Heart right ventricle (tissue), 16 donors: ENCODE measurements at regions of chr4 and their contacts with region 1.

Region 1: DNA sequence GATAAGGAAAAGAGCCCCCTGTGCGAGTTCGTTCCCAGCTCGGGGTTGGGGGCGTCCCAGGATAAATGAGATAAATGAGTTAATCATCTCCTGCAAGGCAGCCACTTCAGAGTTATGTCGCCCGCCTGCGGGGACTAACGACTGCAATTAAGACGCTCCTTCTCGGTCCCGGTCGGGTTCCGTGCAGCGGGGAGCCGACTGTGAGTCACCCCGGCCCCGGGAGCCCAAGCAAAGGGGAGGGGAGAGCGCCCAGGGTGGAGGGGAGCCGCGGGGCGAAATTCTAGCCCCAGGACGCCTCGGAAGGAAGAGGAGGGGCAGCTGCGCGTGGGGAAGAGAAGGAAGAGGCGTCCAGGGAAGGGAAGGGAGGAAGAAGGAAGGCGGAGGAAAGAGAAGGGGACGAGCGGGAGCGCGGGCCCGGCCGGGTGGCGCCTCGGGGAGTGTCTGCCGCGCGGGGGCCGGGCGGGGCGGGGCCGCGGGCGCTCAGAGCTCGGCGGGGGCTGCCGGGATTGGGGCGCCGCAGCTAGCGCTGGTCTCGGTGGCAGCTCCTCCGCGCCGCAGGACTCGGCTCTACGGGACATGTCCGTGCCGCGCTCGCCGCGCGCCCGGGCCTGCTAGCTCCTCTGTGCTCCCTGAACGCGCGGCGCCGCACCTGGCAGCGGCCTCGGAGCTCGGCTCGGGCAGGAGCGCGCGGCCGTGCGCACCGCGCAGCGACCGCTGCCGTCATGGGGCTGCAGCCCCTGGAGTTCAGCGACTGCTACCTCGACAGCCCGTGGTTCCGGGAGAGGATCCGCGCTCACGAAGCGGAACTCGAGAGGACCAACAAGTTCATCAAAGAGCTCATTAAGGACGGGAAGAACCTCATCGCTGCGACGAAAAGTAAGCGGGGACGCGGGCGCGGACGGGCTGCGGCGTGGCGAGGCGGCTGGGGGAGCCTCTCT is at the start of gene ARHGAP10:
- DNase-seq: peak; percentile 67 to 81
- ATAC-seq: peak; percentile 72 to 90 (median 84)
- H3K4me3 ChIP-seq: peak within 1 kb of the TSS; percentile 44 to 93 (median 78)
- H3K27ac ChIP-seq: peak within 1 kb of the TSS; percentile 86 to 95 (median 92)
- H3K4me1 ChIP-seq: peaks cover 0 to 54% (median 23%) of the 10 kb centered on the region in 9 donors
- H3K27me3 ChIP-seq: peaks cover 0 to 5% (median 0%) of the 10 kb centered on the region in 7 donors
- CTCF ChIP-seq: no peak
- total RNA-seq, gene ARHGAP10: 33.9 to 71.1 (median 60.7) TPM

Region 2: DNA sequence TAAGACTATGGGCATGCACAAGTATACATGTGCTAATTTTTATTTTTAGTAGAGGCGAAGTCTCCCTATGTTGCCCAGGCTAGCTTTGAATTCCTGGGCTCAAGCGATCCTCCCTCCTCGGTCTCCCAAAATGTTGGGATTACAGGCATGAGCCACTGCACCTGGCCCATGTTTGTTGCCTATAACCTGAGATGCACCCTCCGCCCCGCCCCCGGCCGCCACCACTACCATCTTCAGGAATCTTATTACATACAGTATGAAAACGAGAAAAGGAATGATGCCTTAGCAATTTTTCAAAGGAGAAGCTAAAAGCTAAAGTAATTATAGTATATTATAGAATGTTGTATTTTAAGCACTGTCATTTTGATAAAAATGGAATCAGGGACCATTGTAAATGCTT is 1031.9 kb before region 1 on chr4:
- intact Hi-C with region 1: no loop called
- DNase-seq: no peak
- ATAC-seq: no peak
- H3K4me3 ChIP-seq: no peak overlapping the region
- H3K27ac ChIP-seq: no peak overlapping the region
- H3K4me1 ChIP-seq: no peaks in the 10 kb centered on the region
- H3K27me3 ChIP-seq: no peaks in the 10 kb centered on the region
- CTCF ChIP-seq: no peak

Region 3: GRCh38 chr4:147096667-147097604 is 634.9 kb before region 1 on chr4:
- intact Hi-C with region 1: no loop called
- DNase-seq: no peak
- ATAC-seq: peak in 3 of 8 donors; percentile 22 to 65 (median 47)
- H3K4me3 ChIP-seq: no peak overlapping the region
- H3K27ac ChIP-seq: no peak overlapping the region
- H3K4me1 ChIP-seq: peaks cover 0 to 5% (median 0%) of the 10 kb centered on the region in 9 donors
- H3K27me3 ChIP-seq: no peaks in the 10 kb centered on the region
- CTCF ChIP-seq: peak; percentile 61 to 85 (median 71)

Region 4: DNA sequence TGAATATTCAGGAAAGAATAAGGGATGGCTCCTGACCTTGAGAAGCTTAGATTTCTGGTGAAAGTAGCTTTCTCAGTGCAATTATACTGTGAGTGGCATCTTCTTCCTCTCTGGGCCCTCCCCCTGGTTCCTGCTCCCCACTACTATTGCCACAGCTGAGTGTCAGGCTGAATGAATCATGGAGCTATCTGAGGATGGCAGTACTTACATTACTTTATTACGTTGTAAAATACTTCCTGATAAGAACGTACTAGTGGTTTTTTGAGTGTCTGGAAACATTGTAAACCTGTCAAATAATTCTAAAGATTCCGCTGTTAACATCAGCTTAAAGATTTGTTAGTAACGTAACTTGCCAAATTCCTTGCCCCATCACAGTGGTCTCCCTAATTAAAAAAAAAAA is 36.3 kb after region 1 on chr4:
- intact Hi-C with region 1: loop called in 1 of 10 experiments (anchors 2 kb)
- DNase-seq: no peak
- ATAC-seq: peak in 2 of 8 donors; percentile 34 to 80
- H3K4me3 ChIP-seq: no peak overlapping the region
- H3K27ac ChIP-seq: no peak overlapping the region
- H3K4me1 ChIP-seq: peaks cover 12 to 60% (median 44%) of the 10 kb centered on the region in 9 donors
- H3K27me3 ChIP-seq: no peaks in the 10 kb centered on the region
- CTCF ChIP-seq: no peak

Region 5: GRCh38 chr4:147786031-147786430 is 54.2 kb after region 1 on chr4:
- intact Hi-C with region 1: loop called in 2 of 10 experiments (anchors 5 to 10 kb)
- DNase-seq: no peak
- ATAC-seq: no peak
- H3K4me3 ChIP-seq: no peak overlapping the region
- H3K27ac ChIP-seq: peak overlapping the region in 9 of 10 donors; percentile 1 to 77 (median 59)
- H3K4me1 ChIP-seq: peaks cover 0 to 68% (median 62%) of the 10 kb centered on the region in 9 donors
- H3K27me3 ChIP-seq: no peaks in the 10 kb centered on the region
- CTCF ChIP-seq: no peak

Region 6: GRCh38 chr4:147831551-147832177 is 99.8 kb after region 1 on chr4:
- intact Hi-C with region 1: loop called in 5 of 10 experiments (anchors 5 to 10 kb)
- DNase-seq: peak in 1 of 2 donors; percentile 29
- ATAC-seq: peak; percentile 20 to 81 (median 53)
- H3K4me3 ChIP-seq: no peak overlapping the region
- H3K27ac ChIP-seq: peak overlapping the region; percentile 73 to 93 (median 89)
- H3K4me1 ChIP-seq: peaks cover 15 to 79% (median 58%) of the 10 kb centered on the region in 9 donors
- H3K27me3 ChIP-seq: no peaks in the 10 kb centered on the region
- CTCF ChIP-seq: no peak

Region 7: GRCh38 chr4:147843162-147843561 is 111.3 kb after region 1 on chr4:
- intact Hi-C with region 1: loop called in 5 of 10 experiments (anchors 5 to 10 kb)
- DNase-seq: no peak
- ATAC-seq: no peak
- H3K4me3 ChIP-seq: no peak overlapping the region
- H3K27ac ChIP-seq: peak overlapping the region in 6 of 10 donors; percentile 43 to 64 (median 54)
- H3K4me1 ChIP-seq: peaks cover 2 to 79% (median 68%) of the 10 kb centered on the region in 9 donors
- H3K27me3 ChIP-seq: no peaks in the 10 kb centered on the region
- CTCF ChIP-seq: peak in 3 of 9 donors; percentile 8 to 28 (median 11)